Sigmoid colon (tissue), 7 donors: ENCODE measurements at regions of chr9 and their contacts with region 1.

Region 1: GRCh38 chr9:69745716-69746437 is 13.9 kb downstream of the PTAR1 start:
- DNase-seq: no peak
- H3K4me3 ChIP-seq: no peak overlapping the region
- H3K27ac ChIP-seq: no peak overlapping the region
- H3K4me1 ChIP-seq: peaks cover 0 to 39% (median 12%) of the 10 kb centered on the region in 4 donors
- H3K27me3 ChIP-seq: no peaks in the 10 kb centered on the region
- CTCF ChIP-seq: no peak
- EP300 ChIP-seq: no peak
- POLR2A ChIP-seq: no peak

Region 2: GRCh38 chr9:69667306-69667705 is 78.6 kb before region 1 on chr9:
- intact Hi-C with region 1: loop called (anchors 5 kb)
- DNase-seq: no peak
- H3K4me3 ChIP-seq: no peak overlapping the region
- H3K27ac ChIP-seq: no peak overlapping the region
- H3K4me1 ChIP-seq: peaks cover 0 to 9% (median 3%) of the 10 kb centered on the region in 4 donors
- H3K27me3 ChIP-seq: no peaks in the 10 kb centered on the region
- CTCF ChIP-seq: no peak
- EP300 ChIP-seq: no peak
- POLR2A ChIP-seq: no peak